Dorsolateral prefrontal cortex (tissue), 120 donors: ENCODE measurements at regions of chr2 and their contacts with region 1.

Region 1: DNA sequence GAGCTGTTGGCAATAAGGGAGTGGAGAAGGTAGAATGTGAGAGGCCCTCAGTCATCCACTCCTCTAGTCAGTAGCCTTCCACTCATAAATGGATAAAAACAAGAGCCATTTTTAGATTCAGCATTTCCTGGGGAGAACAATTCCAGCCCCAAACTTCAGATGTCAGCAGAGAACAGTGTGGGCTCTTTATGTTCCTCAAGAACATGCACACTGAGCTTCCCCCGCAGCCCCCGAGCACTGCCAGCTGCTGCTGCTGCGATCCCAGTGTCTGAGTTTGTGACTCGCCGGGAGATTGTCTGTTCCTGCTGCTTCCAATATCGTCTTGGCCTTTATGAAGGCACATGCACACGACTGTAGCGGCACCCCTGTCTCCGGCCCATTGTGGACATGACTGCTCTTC is 143.7 kb upstream of the CTNNA2 start:
- DNase-seq: peak; percentile 9 to 86 (median 64)
- H3K4me3 ChIP-seq: peak overlapping the region in 10 of 59 donors; percentile 7 to 41 (median 24)
- H3K27ac ChIP-seq: peak overlapping the region in 44 of 59 donors; percentile 4 to 81 (median 55)
- H3K27me3 ChIP-seq: no peaks in the 10 kb centered on the region
- CTCF ChIP-seq: peak in 31 of 56 donors; percentile 9 to 55 (median 27)

Region 2: DNA sequence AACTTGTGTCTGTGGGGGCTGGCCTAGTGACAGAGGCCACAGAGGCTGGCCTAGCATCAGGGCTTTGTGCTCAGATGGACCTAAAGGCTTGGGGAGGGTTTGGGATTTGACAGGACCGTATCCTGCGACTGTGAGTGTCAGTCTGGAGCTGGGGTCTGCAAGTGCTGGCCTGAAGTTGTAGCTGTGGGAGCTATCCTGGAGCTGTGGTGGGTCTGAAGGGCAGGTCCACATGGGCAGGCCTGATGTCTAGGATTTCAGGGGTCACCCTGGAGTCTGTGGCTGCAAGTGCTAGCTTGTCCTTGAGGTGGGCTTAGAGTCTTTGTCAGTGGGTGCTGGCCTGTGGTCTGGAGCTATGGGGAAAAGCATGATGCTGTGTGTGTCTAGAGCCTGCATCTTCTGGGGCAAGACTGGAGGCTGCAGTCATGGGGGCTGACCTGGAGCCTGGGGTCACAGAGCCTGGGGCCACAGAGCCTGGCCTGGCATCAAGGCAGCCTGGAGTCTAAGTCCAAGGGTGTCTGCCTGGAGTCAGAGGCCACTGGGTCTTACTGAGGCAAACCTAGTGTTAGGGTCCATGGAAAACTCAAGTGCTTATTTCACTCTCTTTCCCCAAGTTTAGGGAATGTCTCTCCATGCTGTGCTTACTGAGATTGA is 213.2 kb before region 1 on chr2:
- intact Hi-C with region 1: loop called in 1 of 2 experiments (anchors 2 kb)
- DNase-seq: no peak
- H3K4me3 ChIP-seq: no peak overlapping the region
- H3K27ac ChIP-seq: no peak overlapping the region
- H3K27me3 ChIP-seq: no peaks in the 10 kb centered on the region
- CTCF ChIP-seq: no peak

Region 3: DNA sequence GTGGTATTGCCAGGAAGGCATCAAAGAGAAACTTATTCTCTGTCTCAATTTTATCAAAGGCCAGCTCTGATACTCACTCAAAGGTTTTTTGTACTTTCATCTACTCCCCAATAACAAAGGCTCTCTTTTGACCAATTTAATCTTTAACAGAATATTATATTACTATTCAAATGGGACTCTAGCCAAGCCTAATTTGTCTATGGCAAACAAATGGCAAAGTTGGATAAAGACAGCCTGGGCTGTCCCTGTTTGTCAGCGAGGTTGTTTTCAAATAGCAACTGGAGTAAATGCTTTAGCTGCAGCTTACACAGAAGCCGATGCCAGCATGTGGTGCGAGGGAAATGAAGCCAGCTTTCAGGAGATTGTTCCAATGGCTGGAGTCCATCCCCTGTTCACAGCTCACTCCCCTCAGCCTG is 63.6 kb after region 1 on chr2:
- intact Hi-C with region 1: loop called in 1 of 2 experiments (anchors 5 kb)
- DNase-seq: peak; percentile 4 to 80 (median 62)
- H3K4me3 ChIP-seq: peak overlapping the region in 4 of 59 donors; percentile 12 to 34 (median 18)
- H3K27ac ChIP-seq: peak overlapping the region in 41 of 59 donors; percentile 1 to 73 (median 43)
- H3K27me3 ChIP-seq: peaks cover 0 to 3% (median 0%) of the 10 kb centered on the region in 45 donors
- CTCF ChIP-seq: no peak

Region 4: GRCh38 chr2:79512442-79513401 is 143.6 kb after region 1 on chr2 and contains the start of gene CTNNA2:
- intact Hi-C with region 1: loop called in 1 of 2 experiments (anchors 5 kb)
- DNase-seq: peak; percentile 45 to 85 (median 74)
- H3K4me3 ChIP-seq: peak within 1 kb of the TSS; percentile 53 to 81 (median 67)
- H3K27ac ChIP-seq: peak within 1 kb of the TSS in 52 of 59 donors; percentile 17 to 88 (median 74)
- H3K27me3 ChIP-seq: no peaks in the 10 kb centered on the region
- CTCF ChIP-seq: peak in 45 of 56 donors; percentile 10 to 72 (median 38)
- total RNA-seq, gene CTNNA2: 75.3 to 253 (median 170) TPM